SK-N-SH (cell line): ENCODE measurements at regions of chr14 and their contacts with region 1.

Region 1: DNA sequence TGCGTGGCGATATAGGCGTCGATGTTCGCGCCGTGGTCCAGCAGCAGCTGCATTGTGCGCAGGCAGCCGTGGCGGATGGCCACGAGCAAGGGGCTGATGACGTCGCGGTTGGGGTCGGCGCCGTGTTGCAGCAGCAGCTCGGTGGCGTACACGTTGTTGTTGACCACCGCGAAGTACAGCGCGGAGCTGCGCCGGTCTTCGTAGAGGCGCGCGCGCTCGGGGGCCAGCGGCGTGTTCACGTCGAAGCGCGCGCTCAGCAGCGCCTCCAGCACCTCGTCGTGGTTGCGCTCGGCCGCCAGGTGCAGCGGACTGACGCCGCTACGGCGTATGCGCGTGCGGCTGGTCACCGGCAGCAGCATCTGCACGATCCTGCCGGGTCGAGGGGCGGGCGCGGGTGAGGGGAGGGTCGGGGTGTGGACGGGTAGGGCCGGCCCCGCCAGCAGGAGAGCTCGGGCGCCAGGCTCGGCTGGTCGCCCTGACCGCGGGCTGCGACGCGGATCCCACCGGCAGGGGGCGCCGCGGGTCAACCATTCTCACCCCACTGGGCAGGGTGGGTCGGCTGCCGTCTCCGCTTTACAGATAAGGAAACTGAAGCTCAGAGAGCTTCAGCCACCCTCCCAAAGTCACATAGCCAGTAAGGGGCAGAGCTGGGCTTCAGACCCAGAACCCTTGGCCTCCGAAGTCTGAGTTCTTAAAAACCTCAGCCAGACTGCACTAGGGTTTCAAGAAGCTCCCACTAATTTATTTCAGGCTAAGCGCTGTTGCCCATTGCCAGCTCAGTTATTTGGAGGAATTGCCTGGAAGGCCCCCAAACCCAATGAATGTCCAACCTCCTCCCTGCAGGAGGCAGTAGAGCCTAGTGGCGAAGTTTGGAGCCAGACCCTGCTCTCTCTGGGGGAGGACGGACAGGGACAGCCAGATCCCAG is 12.4 kb downstream of the FAM181A start:
- DNase-seq: peak; percentile 96
- H3K4me3 ChIP-seq: peak overlapping the region; percentile 39 to 51
- H3K27ac ChIP-seq: no peak overlapping the region
- H3K4me1 ChIP-seq: peaks cover 9 to 18% of the 10 kb centered on the region in 2 experiments; a peak in 3 of 4 replicates
- H3K27me3 ChIP-seq: peaks cover 39% of the 10 kb centered on the region
- CTCF ChIP-seq: peak; percentile 77
- EP300 ChIP-seq: no peak
- RAD21 ChIP-seq: peak; percentile 83

Region 2: DNA sequence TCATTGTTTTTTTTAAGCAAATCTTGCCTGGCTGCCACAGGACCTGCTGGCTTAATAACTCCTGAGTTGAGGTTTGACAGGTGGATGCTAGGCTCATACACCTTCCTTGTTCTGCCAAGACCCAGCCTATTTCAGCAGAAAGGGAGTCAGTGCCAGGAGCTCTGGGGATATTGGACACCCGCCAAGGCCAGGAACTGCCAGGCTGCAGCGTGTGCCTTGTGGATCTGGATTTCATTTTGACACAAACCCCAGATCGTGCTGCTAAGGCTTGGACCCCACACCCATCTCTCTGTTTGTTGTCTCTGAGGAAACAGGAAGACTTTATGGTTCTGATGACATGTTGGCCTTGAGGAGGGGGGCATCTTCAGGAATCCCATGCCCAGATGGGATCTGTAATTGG is 106.9 kb before region 1 on chr14:
- CTCF ChIA-PET with region 1: no interaction called
- POLR2A ChIA-PET with region 1: no interaction called
- DNase-seq: peak; percentile 81
- H3K4me3 ChIP-seq: no peak overlapping the region
- H3K27ac ChIP-seq: peak overlapping the region in 1 of 2 experiments; percentile 76; a peak in 2 of 4 replicates
- H3K4me1 ChIP-seq: peaks cover 0 to 35% of the 10 kb centered on the region in 2 experiments; a peak in 2 of 4 replicates
- H3K27me3 ChIP-seq: no peaks in the 10 kb centered on the region
- CTCF ChIP-seq: no peak
- EP300 ChIP-seq: peak in 1 of 2 experiments; percentile 68; a peak in 1 of 4 replicates
- RAD21 ChIP-seq: 0 out of 2 replicates have a peak, but pooled peaks have one; percentile 10

Region 3: GRCh38 chr14:93898081-93898611 is 41.4 kb before region 1 on chr14:
- CTCF ChIA-PET with region 1: interaction called, 16 read pairs
- POLR2A ChIA-PET with region 1: no interaction called
- DNase-seq: no peak
- H3K4me3 ChIP-seq: no peak overlapping the region
- H3K27ac ChIP-seq: no peak overlapping the region
- H3K4me1 ChIP-seq: peaks cover 0 to 39% of the 10 kb centered on the region in 2 experiments; a peak in 2 of 4 replicates
- H3K27me3 ChIP-seq: no peaks in the 10 kb centered on the region; the same call in 1 of the 2 replicates
- CTCF ChIP-seq: no peak
- EP300 ChIP-seq: no peak
- RAD21 ChIP-seq: no peak

Region 4: DNA sequence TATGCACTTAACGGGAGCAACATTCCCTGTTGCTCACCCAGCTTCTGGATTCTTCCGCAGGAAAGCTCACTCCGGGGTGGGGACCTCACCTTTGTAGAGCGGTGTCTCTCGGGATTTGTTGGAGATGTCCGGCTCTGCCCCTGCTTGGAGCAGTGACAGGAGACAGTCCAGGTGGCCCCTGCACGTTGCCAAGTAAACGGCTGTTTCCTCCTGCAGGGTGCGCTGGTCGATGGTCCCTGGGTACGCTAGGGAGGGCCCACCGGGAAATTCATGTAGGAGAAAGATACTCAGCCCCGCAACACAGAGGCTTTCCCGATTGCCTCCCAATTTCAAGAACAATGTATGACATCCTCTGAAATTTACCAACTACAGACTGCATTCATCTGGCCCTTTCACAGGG is 13.7 kb after region 1 on chr14:
- CTCF ChIA-PET with region 1: interaction called, 75 read pairs
- POLR2A ChIA-PET with region 1: no interaction called
- DNase-seq: peak; percentile 42
- H3K4me3 ChIP-seq: no peak overlapping the region
- H3K27ac ChIP-seq: no peak overlapping the region
- H3K4me1 ChIP-seq: no peaks in the 10 kb centered on the region; a peak in 1 of 4 replicates
- H3K27me3 ChIP-seq: no peaks in the 10 kb centered on the region
- CTCF ChIP-seq: no peak
- EP300 ChIP-seq: no peak
- RAD21 ChIP-seq: no peak

Region 5: GRCh38 chr14:93984987-93985410 is 45.4 kb after region 1 on chr14:
- CTCF ChIA-PET with region 1: interaction called, 29 read pairs
- POLR2A ChIA-PET with region 1: no interaction called
- DNase-seq: peak; percentile 47
- H3K4me3 ChIP-seq: no peak overlapping the region
- H3K27ac ChIP-seq: no peak overlapping the region
- H3K4me1 ChIP-seq: peaks cover 5 to 7% of the 10 kb centered on the region in 2 experiments; a peak in 2 of 4 replicates
- H3K27me3 ChIP-seq: no peaks in the 10 kb centered on the region
- CTCF ChIP-seq: peak; percentile 58
- EP300 ChIP-seq: no peak
- RAD21 ChIP-seq: peak; percentile 29; the same call in 1 of the 2 replicates

Region 6: DNA sequence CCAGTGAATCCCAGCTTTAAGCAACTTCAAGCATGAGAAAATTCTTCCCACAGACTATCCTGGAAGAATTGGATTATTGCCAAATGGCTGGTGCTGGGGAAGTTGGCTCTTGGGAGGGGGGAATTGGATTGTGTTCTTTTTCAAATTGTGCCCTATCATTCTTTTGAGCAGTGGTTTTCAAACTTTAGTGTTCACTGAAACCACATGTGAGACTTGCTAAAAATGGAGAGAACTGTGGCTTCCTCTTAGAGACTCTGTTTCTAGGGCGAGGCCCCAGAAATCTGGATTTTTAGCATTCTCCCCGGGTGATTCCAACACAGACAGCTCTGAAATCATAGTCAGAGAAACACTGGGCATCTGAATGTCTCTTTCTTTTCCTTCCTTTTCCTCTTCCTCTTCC is 72.2 kb after region 1 on chr14:
- CTCF ChIA-PET with region 1: interaction called, 15 read pairs
- POLR2A ChIA-PET with region 1: no interaction called
- DNase-seq: no peak
- H3K4me3 ChIP-seq: no peak overlapping the region
- H3K27ac ChIP-seq: no peak overlapping the region
- H3K4me1 ChIP-seq: peaks cover 0 to 3% of the 10 kb centered on the region in 2 experiments; a peak in 1 of 4 replicates
- H3K27me3 ChIP-seq: peaks cover 6% of the 10 kb centered on the region; the same call in 1 of the 2 replicates
- CTCF ChIP-seq: no peak
- EP300 ChIP-seq: no peak
- RAD21 ChIP-seq: no peak

Region 7: GRCh38 chr14:94136575-94137331 is 197.2 kb after region 1 on chr14:
- CTCF ChIA-PET with region 1: interaction called, 27 read pairs
- POLR2A ChIA-PET with region 1: no interaction called
- DNase-seq: peak; percentile 81
- H3K4me3 ChIP-seq: no peak overlapping the region
- H3K27ac ChIP-seq: no peak overlapping the region
- H3K4me1 ChIP-seq: peaks cover 0 to 3% of the 10 kb centered on the region in 2 experiments; a peak in 2 of 4 replicates
- H3K27me3 ChIP-seq: no peaks in the 10 kb centered on the region
- CTCF ChIP-seq: peak; percentile 92
- EP300 ChIP-seq: no peak
- RAD21 ChIP-seq: peak; percentile 98